ENCODE measurements at regions of chr3 and their contacts with region 1.

Region 1: GRCh38 chr3:136042608-136043221 is 77.2 kb downstream of the PPP2R3A start:
- DNase-seq: no peak
- H3K4me3 ChIP-seq: no peak overlapping the region
- H3K27ac ChIP-seq: no peak overlapping the region
- H3K27me3 ChIP-seq: no peaks in the 10 kb centered on the region
- CTCF ChIP-seq: peak; percentile 66

Region 2: GRCh38 chr3:135865085-135865484 is 177.6 kb before region 1 on chr3:
- CTCF ChIA-PET with region 1: no interaction called
- POLR2A ChIA-PET with region 1: no interaction called
- DNase-seq: no peak
- H3K4me3 ChIP-seq: no peak overlapping the region
- H3K27ac ChIP-seq: no peak overlapping the region
- H3K27me3 ChIP-seq: no peaks in the 10 kb centered on the region
- CTCF ChIP-seq: no peak

Region 3: GRCh38 chr3:135895106-135895733 is 147.5 kb before region 1 on chr3:
- CTCF ChIA-PET with region 1: interaction called, 26 read pairs
- POLR2A ChIA-PET with region 1: no interaction called
- DNase-seq: peak; percentile 39
- H3K4me3 ChIP-seq: no peak overlapping the region
- H3K27ac ChIP-seq: no peak overlapping the region
- H3K27me3 ChIP-seq: no peaks in the 10 kb centered on the region
- CTCF ChIP-seq: peak; percentile 97

Region 4: GRCh38 chr3:135918580-135918962 is 124.1 kb before region 1 on chr3:
- CTCF ChIA-PET with region 1: interaction called, 352 read pairs
- POLR2A ChIA-PET with region 1: no interaction called
- DNase-seq: no peak
- H3K4me3 ChIP-seq: no peak overlapping the region
- H3K27ac ChIP-seq: no peak overlapping the region
- H3K27me3 ChIP-seq: no peaks in the 10 kb centered on the region
- CTCF ChIP-seq: peak; percentile 62

Region 5: DNA sequence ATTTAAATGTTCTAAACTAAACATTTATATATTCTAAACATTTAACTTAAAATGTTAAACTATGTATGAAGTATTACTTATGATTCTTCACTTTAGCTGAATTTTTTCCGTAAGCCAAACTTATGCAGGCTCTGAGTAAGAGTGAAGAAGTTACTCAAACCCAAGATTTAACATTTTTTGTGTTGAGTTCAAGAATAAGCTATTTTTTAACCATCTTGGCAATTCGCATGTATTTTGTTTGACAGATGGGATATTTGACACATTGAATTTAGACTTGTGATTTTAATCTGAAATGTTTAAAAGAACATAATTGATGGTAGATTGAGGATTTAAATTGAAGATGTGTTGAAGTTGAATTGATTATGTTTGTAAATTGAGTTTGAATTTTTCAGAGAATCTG is 91.8 kb before region 1 on chr3:
- CTCF ChIA-PET with region 1: interaction called, 11 read pairs
- POLR2A ChIA-PET with region 1: no interaction called
- DNase-seq: no peak
- H3K4me3 ChIP-seq: no peak overlapping the region
- H3K27ac ChIP-seq: no peak overlapping the region
- H3K27me3 ChIP-seq: no peaks in the 10 kb centered on the region
- CTCF ChIP-seq: no peak

Region 6: DNA sequence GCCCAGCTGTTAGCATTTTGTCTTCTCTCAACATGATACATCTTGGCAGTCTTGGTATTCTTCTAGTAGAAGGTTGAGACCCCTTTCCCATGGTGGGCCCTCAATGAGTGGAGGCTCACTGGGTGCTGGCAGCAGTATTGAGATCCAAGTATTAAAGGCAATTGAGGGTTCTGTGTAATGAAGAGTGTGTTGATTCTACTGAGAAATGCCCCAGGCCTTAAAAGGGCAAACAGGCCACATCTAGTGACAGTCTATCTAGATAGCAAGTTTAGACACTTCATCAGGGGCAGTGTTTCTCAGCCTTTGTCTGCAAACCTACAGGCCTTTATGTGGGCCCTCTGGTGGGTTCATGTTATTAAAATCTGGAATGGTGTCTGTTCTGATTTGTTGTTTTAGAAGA is 67.7 kb before region 1 on chr3:
- CTCF ChIA-PET with region 1: interaction called, 10 read pairs
- POLR2A ChIA-PET with region 1: no interaction called
- DNase-seq: no peak
- H3K4me3 ChIP-seq: no peak overlapping the region
- H3K27ac ChIP-seq: no peak overlapping the region
- H3K27me3 ChIP-seq: no peaks in the 10 kb centered on the region
- CTCF ChIP-seq: no peak

Region 7: GRCh38 chr3:136022529-136023263 is 20.0 kb before region 1 on chr3:
- CTCF ChIA-PET with region 1: interaction called, 32 read pairs
- POLR2A ChIA-PET with region 1: no interaction called
- DNase-seq: no peak
- H3K4me3 ChIP-seq: no peak overlapping the region
- H3K27ac ChIP-seq: no peak overlapping the region
- H3K27me3 ChIP-seq: no peaks in the 10 kb centered on the region
- CTCF ChIP-seq: no peak

Region 8: DNA sequence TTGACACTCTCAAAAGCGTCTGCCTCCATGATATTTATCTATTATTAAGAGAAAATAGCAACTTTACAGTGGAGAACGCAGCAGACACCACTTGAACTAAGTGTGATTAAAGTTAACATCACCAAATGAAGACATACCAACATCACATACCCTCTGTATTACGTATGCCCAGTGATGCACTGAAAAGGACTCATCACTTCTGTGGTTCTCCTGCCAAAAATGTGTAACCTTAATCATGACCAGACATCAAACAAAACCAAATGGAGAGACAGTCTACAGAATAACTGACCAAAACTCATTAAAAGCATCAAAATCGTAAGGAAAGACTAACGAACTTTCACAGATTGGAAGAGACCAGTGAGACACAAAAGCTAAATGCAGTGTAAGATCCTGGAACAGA is 26.0 kb after region 1 on chr3:
- CTCF ChIA-PET with region 1: interaction called, 14 read pairs
- POLR2A ChIA-PET with region 1: no interaction called
- DNase-seq: peak; percentile 46
- H3K4me3 ChIP-seq: no peak overlapping the region
- H3K27ac ChIP-seq: no peak overlapping the region
- H3K27me3 ChIP-seq: no peaks in the 10 kb centered on the region
- CTCF ChIP-seq: no peak